Mucosa of descending colon (tissue), 3 donors: ENCODE measurements at regions of chr15 and their contacts with region 1.

Region 1: DNA sequence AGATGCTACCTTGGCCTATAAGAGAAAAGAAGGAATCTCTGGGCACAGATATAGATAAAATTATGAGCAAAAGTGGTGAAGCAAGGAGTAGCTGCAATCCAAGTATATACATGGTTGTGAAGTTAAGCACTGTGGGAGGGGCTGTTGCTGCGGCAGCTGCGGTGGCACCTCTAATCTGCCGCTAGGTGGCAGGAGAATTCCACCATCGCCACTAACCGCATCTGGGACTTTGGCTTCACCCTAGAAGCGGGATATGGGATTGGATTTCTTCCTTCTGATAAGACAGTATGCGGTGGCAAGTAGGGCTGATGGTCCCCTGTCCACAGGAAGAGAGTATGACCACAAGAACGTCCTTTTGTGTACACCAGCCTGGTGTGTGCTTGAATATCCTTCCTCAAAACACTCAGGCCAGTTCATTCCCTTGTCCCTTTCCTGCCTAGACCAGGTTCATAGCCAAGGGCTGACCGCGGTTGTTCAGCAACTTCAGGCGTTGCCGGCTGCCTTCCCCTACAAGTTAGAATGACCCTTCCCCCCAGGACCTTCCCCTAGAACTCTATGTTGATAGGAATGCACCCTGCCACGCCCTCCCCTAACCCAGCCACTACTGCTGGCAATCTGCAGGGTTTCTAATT is 5.1 kb downstream of the MAGEL2 start:
- DNase-seq: peak; percentile 44 to 75 (median 67)
- ATAC-seq: peak; percentile 90
- H3K4me3 ChIP-seq: no peak overlapping the region
- H3K4me1 ChIP-seq: no peaks in the 10 kb centered on the region
- CTCF ChIP-seq: peak; percentile 63

Region 2: DNA sequence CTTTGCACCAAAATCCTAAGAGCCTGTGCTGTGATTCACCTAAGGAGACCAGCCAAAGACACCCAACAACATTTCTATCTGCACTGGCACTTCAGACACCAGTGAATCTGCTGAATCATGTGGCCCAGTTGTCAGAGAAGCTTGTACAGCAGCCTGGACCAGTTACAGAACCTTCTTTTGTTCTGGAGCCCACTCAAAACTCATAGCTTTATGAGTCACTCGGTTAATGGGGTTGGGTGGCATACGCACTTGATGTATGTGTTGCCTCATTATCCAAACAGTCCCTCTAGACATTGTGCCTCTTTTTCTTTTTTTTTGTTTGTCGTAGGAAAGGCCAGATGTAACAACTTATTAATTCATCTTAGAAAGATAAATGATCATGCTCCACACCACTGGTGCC is 169.9 kb before region 1 on chr15:
- intact Hi-C with region 1: no loop called
- DNase-seq: no peak
- ATAC-seq: no peak
- H3K4me3 ChIP-seq: no peak overlapping the region
- H3K4me1 ChIP-seq: no peaks in the 10 kb centered on the region
- CTCF ChIP-seq: no peak

Region 3: GRCh38 chr15:23708332-23708731 is 65.8 kb after region 1 on chr15:
- intact Hi-C with region 1: no loop called
- DNase-seq: no peak
- ATAC-seq: no peak
- H3K4me3 ChIP-seq: no peak overlapping the region
- H3K4me1 ChIP-seq: no peaks in the 10 kb centered on the region
- CTCF ChIP-seq: no peak

Region 4: GRCh38 chr15:23857028-23857641 is 214.6 kb after region 1 on chr15:
- intact Hi-C with region 1: loop called (anchors 5 to 10 kb)
- DNase-seq: peak in 2 of 3 donors; percentile 37 to 72
- ATAC-seq: peak; percentile 43
- H3K4me3 ChIP-seq: no peak overlapping the region
- H3K4me1 ChIP-seq: no peaks in the 10 kb centered on the region
- CTCF ChIP-seq: no peak

Region 5: GRCh38 chr15:23866832-23867231 is 224.3 kb after region 1 on chr15:
- intact Hi-C with region 1: loop called in 1 of 2 experiments (anchors 10 kb)
- DNase-seq: peak in 1 of 3 donors; percentile 21
- ATAC-seq: no peak
- H3K4me3 ChIP-seq: no peak overlapping the region
- H3K4me1 ChIP-seq: no peaks in the 10 kb centered on the region
- CTCF ChIP-seq: no peak